Activated CD4-positive, alpha-beta T cell treated with anti-CD3 and anti-CD28 coated beads, Interleukin-2, amount 10 ng/mL, durations not matched to agents 7 days and 5 days (primary cell): ENCODE measurements at regions of chr9 and their contacts with region 1.

Region 1: GRCh38 chr9:132679946-132680625 is 9.8 kb downstream of the GTF3C4 start:
- DNase-seq: no peak
- H3K4me3 Mint-ChIP-seq: no peak overlapping the region
- H3K27ac Mint-ChIP-seq: no peak overlapping the region
- H3K4me1 Mint-ChIP-seq: peaks cover 53% of the 10 kb centered on the region
- H3K27me3 Mint-ChIP-seq: no peaks in the 10 kb centered on the region

Region 2: DNA sequence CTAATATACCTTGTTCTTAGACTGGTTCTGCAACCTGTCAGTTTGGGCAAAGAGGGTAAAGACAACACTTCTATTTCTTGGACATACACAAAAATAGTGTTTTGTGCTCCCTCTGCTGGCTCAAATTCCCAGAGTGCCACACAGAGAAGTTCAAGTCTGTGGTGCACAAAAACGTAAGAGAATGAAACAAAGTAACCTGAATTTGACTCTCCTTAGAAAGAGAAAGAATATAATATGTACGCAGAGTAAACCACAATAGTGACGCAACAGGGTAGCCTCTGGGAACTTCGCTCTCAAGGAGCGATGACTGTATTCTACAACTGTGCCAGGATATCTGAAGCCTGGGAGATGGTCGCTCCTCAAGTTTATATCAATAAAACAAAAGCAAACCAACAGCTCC is 28.8 kb before region 1 on chr9:
- CTCF ChIA-PET with region 1: no interaction called
- POLR2A ChIA-PET with region 1: no interaction called
- DNase-seq: peak; percentile 25
- H3K4me3 Mint-ChIP-seq: no peak overlapping the region
- H3K27ac Mint-ChIP-seq: no peak overlapping the region
- H3K4me1 Mint-ChIP-seq: peaks cover 5% of the 10 kb centered on the region
- H3K27me3 Mint-ChIP-seq: no peaks in the 10 kb centered on the region

Region 3: GRCh38 chr9:132669698-132670456 is 10.2 kb before region 1 on chr9 and contains the start of gene DDX31:
- CTCF ChIA-PET with region 1: interaction called, 12 read pairs
- POLR2A ChIA-PET with region 1: no interaction called
- DNase-seq: peak; percentile 86
- H3K4me3 Mint-ChIP-seq: peak within 1 kb of the TSS; percentile 88
- H3K27ac Mint-ChIP-seq: peak within 1 kb of the TSS; percentile 92
- H3K4me1 Mint-ChIP-seq: peaks cover 47% of the 10 kb centered on the region
- H3K27me3 Mint-ChIP-seq: no peaks in the 10 kb centered on the region
- total RNA-seq, gene DDX31: 12.4 to 13.2 TPM